ENCODE measurements at regions of chr2 and their contacts with region 1.

Region 1: DNA sequence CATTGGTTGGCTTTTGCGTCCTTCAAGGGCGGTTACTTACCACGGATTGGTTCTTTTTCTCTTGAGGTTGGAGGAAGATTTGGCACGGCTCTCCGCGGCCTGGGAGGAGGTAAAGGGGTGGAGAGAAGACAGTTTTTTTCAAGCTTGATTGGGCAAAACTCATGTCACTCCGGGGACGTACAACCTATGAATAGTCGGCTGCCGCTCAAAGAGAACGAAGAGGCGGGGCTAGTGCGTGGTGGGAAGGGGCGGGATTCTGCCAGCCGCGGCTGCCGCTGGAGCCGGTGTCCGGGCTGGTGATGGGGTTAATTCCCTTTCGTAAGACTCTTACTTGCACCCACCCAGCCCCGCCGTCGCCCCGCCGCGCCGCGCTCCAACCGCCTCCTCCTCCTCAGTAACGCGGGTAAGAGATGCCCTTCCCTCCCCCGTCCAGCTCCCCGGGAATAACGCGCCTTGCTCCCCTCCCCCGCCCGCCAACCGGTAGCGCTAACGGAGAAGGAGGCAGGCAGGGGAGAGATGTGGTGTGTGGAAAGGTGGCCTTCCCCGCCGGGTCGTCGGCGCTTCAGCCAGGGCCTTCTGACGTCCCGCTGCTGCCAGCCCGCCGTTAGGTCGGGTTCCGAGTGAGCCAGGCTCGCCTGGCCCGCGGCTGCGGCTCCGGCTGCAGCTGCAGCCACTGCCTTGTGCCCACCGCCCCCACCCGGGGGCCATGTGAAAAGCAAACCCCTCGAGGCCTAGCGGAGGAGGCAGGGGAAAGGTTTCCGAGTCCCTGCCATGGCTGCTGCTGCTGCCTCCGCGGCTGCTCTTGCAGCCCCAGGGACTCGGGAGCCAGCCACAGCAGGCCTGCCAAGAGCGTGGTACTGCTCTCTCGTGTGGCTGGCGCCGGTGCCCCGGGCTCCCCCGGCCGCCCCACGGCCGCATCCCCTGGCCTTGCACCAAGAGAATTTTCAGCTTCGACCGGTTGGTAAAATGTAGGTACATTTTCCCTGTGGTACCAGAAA is at the start of gene R3HDM1:
- DNase-seq: peak; percentile 95 to 98
- H3K4me3 ChIP-seq: peak within 1 kb of the TSS; percentile 60
- H3K27ac ChIP-seq: peak within 1 kb of the TSS; percentile 73
- H3K4me1 ChIP-seq: peaks cover 14% of the 10 kb centered on the region
- H3K27me3 ChIP-seq: no peaks in the 10 kb centered on the region
- CTCF ChIP-seq: no peak
- total RNA-seq, gene R3HDM1: 24.1 and 36.7 TPM in 2 replicates

Region 2: GRCh38 chr2:134918526-134919340 is 612.8 kb before region 1 on chr2 and contains the start of gene CCNT2:
- CTCF ChIA-PET with region 1: no interaction called
- POLR2A ChIA-PET with region 1: no interaction called
- intact Hi-C with region 1: loop called (anchors 5 kb)
- DNase-seq: peak; percentile 95 to 99
- H3K4me3 ChIP-seq: peak within 1 kb of the TSS; percentile 91
- H3K27ac ChIP-seq: peak within 1 kb of the TSS; percentile 94
- H3K4me1 ChIP-seq: peaks cover 27% of the 10 kb centered on the region
- H3K27me3 ChIP-seq: no peaks in the 10 kb centered on the region
- CTCF ChIP-seq: no peak
- total RNA-seq, gene CCNT2: 19.1 and 26.2 TPM in 2 replicates

Region 3: DNA sequence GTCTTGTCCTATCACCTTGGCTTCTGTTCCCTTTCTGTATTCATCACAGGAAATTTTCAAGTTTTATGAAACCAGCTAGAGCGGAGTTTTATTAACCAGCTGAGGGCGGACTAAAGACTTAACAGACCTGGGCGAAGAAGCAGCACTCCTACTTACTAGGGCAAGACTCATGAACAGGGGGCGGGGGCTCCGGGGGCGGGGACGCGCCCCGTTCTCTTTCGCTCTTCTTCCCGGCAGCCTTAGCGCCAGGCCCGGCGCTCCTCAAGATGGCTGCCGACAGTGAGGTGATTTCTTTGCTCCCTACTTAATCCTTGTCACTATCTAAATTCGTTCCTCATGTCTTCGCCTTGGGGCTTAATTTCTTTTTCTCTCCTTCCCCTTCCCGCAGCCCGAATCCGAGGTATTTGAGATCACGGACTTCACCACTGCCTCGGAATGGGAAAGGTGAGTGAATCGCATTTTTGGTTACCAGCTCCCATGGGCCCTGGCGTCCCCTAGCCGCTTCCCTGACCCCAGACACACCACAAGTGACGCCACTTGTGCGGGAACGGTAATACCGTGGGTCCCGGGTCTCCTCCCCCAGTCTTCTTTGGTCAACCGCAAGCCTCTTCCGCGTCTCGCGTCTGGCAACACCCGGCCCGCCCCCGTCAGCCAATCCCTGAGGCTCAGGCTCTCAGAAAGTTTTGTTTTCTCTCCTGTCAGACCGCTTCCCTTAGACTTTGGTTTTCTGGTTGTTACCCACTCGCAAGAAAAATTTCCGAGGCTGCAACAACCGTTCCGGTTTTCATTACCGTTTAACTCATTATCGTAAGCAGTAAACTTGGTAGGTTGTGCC is 479.3 kb before region 1 on chr2 and contains the start of gene RAB3GAP1:
- CTCF ChIA-PET with region 1: no interaction called
- POLR2A ChIA-PET with region 1: no interaction called
- intact Hi-C with region 1: loop called (anchors 5 kb)
- DNase-seq: peak; percentile 49 to 65
- H3K4me3 ChIP-seq: peak within 1 kb of the TSS; percentile 87
- H3K27ac ChIP-seq: peak within 1 kb of the TSS; percentile 82
- H3K4me1 ChIP-seq: peaks cover 26% of the 10 kb centered on the region
- H3K27me3 ChIP-seq: no peaks in the 10 kb centered on the region
- CTCF ChIP-seq: no peak
- total RNA-seq, gene RAB3GAP1: 29.5 and 36.8 TPM in 2 replicates

Region 4: GRCh38 chr2:135546436-135546835 is 14.9 kb after region 1 on chr2:
- CTCF ChIA-PET with region 1: no interaction called
- POLR2A ChIA-PET with region 1: no interaction called
- intact Hi-C with region 1: no loop called
- DNase-seq: no peak
- H3K4me3 ChIP-seq: no peak overlapping the region
- H3K27ac ChIP-seq: no peak overlapping the region
- H3K4me1 ChIP-seq: no peaks in the 10 kb centered on the region
- H3K27me3 ChIP-seq: no peaks in the 10 kb centered on the region
- CTCF ChIP-seq: no peak

Region 5: GRCh38 chr2:135741395-135742324 is 210.1 kb after region 1 on chr2 and contains the start of gene UBXN4:
- CTCF ChIA-PET with region 1: no interaction called
- POLR2A ChIA-PET with region 1: no interaction called
- intact Hi-C with region 1: loop called (anchors 10 kb)
- DNase-seq: peak; percentile 91 to 94
- H3K4me3 ChIP-seq: peak within 1 kb of the TSS; percentile 99
- H3K27ac ChIP-seq: peak within 1 kb of the TSS; percentile 86
- H3K4me1 ChIP-seq: peaks cover 18% of the 10 kb centered on the region
- H3K27me3 ChIP-seq: no peaks in the 10 kb centered on the region
- CTCF ChIP-seq: peak; percentile 54
- total RNA-seq, gene UBXN4: 75.6 and 95.0 TPM in 2 replicates

Measured in PC-9 (cell line).